ENCODE measurements at regions of chr16 and their contacts with region 1.

Region 1: GRCh38 chr16:2267913-2268666 is at the start of gene RNPS1:
- DNase-seq: peak; percentile 97
- H3K4me3 ChIP-seq: peak within 1 kb of the TSS; percentile 62 to 97 (median 78)
- H3K27ac ChIP-seq: peak within 1 kb of the TSS; percentile 90 to 99 (median 96)
- H3K4me1 ChIP-seq: peaks cover 17 to 35% (median 28%) of the 10 kb centered on the region in 4 donors
- H3K27me3 ChIP-seq: no peaks in the 10 kb centered on the region
- CTCF ChIP-seq: no peak
- EP300 ChIP-seq: peak; percentile 2
- POLR2A ChIP-seq: peak; percentile 99
- total RNA-seq, gene RNPS1: 110 to 153 (median 126) TPM

Region 2: DNA sequence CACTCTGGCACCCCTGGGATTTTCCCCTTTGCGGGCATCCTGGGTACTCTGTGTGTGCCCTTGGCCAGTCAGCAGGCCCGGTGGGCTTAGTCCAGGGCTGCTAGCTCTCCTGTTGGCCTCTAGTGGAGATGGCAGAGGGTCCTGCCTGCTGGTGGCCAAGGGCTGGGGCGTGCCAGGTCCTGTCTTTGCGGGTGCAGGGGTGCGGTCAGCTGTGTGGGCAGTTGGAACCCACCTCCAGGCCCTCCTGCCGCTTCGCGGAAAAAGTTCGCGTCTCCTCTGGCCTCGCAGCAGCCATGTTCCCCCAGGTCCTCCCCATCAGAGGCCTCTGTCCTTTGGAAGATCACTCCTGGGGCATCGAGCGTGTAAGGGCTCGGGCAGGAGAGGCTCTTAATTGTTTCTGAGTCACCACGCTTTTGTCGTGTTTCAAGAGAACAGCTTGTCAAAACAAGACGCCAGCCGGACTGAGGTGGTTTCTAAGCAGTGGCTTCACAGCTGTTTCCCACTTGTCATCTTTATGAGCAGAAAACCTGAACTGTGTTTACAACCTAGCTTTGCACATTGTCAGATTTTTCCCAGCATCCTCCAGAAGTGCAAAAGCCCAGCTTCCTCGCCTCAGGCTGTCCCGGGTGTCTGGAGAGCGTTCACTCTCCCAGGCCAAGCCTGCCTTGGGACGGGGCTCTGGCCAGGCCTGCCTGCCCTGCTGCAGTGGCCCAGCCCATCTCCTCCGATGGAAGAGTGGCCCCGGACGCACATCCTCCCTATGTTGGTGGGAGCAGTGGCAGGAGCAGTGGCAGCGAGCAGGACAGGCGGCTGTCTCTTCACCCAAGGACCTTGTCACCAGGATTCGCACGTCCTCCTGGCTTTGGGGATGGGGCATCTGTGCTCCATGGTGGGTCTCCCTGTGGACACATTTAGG is 36.8 kb before region 1 on chr16:
- in situ Hi-C with region 1: no loop called
- intact Hi-C with region 1: loop called (anchors 1 kb)
- DNase-seq: no peak
- H3K4me3 ChIP-seq: no peak overlapping the region
- H3K27ac ChIP-seq: no peak overlapping the region
- H3K4me1 ChIP-seq: peaks cover 4 to 20% (median 6%) of the 10 kb centered on the region in 4 donors
- H3K27me3 ChIP-seq: peaks cover 12% of the 10 kb centered on the region
- CTCF ChIP-seq: no peak
- EP300 ChIP-seq: no peak
- POLR2A ChIP-seq: no peak

Region 3: DNA sequence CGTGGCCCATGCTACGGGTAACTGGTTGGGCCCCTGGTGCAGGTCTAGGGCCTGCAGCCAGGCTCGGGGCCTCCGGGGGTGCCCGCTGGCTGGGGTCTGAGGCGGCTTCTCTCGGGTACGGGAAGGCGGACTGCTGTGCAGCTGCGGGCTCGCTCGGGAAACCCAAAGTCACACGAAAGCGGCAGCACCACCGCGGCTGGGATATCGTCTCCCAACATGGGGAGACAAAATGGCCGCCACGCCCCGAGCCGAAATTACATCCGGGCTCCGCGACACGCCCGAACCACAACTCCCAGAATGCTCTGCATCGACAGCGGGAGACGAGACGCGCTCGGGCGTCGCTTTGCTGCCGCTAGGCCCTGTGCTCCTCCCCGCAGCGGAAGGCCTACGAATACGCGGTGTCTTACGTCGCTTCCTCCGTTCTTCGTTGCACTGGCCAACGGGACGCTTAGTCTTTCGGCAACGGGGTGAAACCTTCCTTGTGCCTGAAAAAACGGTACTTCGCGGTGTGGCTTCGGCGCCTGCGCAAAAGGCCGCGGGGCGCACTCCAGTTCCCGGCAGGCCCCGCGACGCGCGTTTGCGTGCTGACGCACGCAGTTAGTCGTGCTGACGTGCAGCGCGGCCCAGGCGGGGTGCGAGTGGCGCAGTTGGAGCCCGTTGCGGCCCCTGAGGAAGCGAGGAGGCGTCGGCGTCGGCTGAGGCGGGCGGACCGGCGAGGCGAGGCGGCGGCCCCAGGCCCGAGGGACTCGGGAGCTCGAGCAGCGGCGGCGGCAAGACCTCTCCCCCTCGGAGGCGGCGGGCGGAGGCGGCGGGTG is 484.2 kb after region 1 on chr16 and contains the start of gene SRRM2:
- in situ Hi-C with region 1: no loop called
- intact Hi-C with region 1: no loop called
- DNase-seq: peak; percentile 95
- H3K4me3 ChIP-seq: peak within 1 kb of the TSS; percentile 75 to 94 (median 86)
- H3K27ac ChIP-seq: peak within 1 kb of the TSS; percentile 98 to 100 (median 99)
- H3K4me1 ChIP-seq: peaks cover 31 to 45% (median 38%) of the 10 kb centered on the region in 4 donors
- H3K27me3 ChIP-seq: no peaks in the 10 kb centered on the region
- CTCF ChIP-seq: peak in 2 of 5 experiments; percentile 16 to 39
- EP300 ChIP-seq: no peak
- POLR2A ChIP-seq: peak; percentile 94
- total RNA-seq, gene SRRM2: 545 to 3,500 (median 1,361) TPM

Region 4: GRCh38 chr16:2980227-2981086 is 712.4 kb after region 1 on chr16 and contains the start of gene PKMYT1:
- in situ Hi-C with region 1: no loop called
- intact Hi-C with region 1: loop called (anchors 5 kb)
- DNase-seq: peak; percentile 94
- H3K4me3 ChIP-seq: peak within 1 kb of the TSS; percentile 62 to 75 (median 73)
- H3K27ac ChIP-seq: peak within 1 kb of the TSS; percentile 87 to 95 (median 90)
- H3K4me1 ChIP-seq: peaks cover 4 to 36% (median 26%) of the 10 kb centered on the region in 4 donors
- H3K27me3 ChIP-seq: peaks cover 8% of the 10 kb centered on the region
- CTCF ChIP-seq: no peak
- EP300 ChIP-seq: no peak
- POLR2A ChIP-seq: peak; percentile 97
- total RNA-seq, gene PKMYT1: 0.55 to 3.6 (median 3.0) TPM in 3 of 4 donors, not detected in the other

Region 5: DNA sequence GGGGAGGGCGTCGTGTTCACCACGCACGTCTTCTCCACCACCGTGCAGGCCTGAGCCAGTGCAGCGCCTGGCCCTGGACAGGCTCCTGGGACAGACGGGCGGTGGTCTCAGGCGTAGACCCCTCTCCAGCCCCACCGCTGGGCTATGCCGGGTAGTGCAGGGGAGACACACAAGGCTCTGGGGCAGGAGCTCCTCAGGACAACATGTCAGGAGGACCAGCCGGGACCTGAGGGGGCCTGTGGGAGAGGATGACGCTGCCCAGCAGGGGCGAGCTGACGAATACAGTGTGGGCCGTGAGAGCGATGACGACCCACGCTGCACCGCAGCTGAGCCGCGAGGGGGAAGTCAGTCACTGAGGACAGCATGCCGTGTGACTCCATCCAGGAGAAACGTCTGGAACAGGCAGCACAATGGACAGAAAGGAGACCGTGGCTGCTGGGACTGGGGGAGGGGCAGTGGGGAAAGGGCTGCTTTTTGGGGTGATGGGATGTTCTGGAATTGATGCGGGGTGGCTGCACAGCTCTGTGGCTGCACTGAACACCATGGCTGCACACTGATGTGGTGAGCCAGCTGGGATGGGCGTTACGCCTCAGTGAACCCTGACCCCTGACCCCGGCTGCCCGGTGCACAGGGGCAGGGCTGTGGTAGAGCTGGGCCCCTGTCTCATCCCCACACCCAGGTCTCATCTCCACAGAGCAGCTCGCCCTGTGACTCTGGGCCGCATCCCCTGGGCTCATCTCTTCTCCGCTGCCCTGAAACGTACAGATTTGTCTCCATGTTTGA is 1406.6 kb after region 1 on chr16:
- in situ Hi-C with region 1: no loop called
- intact Hi-C with region 1: no loop called
- DNase-seq: no peak
- H3K4me3 ChIP-seq: no peak overlapping the region
- H3K27ac ChIP-seq: no peak overlapping the region
- H3K4me1 ChIP-seq: no peaks in the 10 kb centered on the region
- H3K27me3 ChIP-seq: no peaks in the 10 kb centered on the region
- CTCF ChIP-seq: no peak
- EP300 ChIP-seq: no peak
- POLR2A ChIP-seq: no peak